BJ (cell line): ENCODE measurements at regions of chr12 and their contacts with region 1.

Region 1: GRCh38 chr12:25436203-25437030 is 116.7 kb downstream of the LMNTD1 start:
- DNase-seq: no peak
- H3K4me3 ChIP-seq: no peak overlapping the region
- H3K27me3 ChIP-seq: no peaks in the 10 kb centered on the region
- CTCF ChIP-seq: peak; percentile 81

Region 2: GRCh38 chr12:25377469-25378177 is 58.8 kb before region 1 on chr12:
- CTCF ChIA-PET with region 1: no interaction called
- POLR2A ChIA-PET with region 1: no interaction called
- DNase-seq: no peak
- H3K4me3 ChIP-seq: no peak overlapping the region
- H3K27me3 ChIP-seq: no peaks in the 10 kb centered on the region
- CTCF ChIP-seq: no peak

Region 3: GRCh38 chr12:25424211-25424731 is 12.1 kb before region 1 on chr12:
- CTCF ChIA-PET with region 1: interaction called, 20 read pairs
- POLR2A ChIA-PET with region 1: no interaction called
- DNase-seq: no peak
- H3K4me3 ChIP-seq: no peak overlapping the region
- H3K27me3 ChIP-seq: no peaks in the 10 kb centered on the region
- CTCF ChIP-seq: no peak

Region 4: GRCh38 chr12:25482625-25483024 is 46.2 kb after region 1 on chr12:
- CTCF ChIA-PET with region 1: no interaction called
- POLR2A ChIA-PET with region 1: no interaction called
- DNase-seq: no peak
- H3K4me3 ChIP-seq: no peak overlapping the region
- H3K27me3 ChIP-seq: no peaks in the 10 kb centered on the region
- CTCF ChIP-seq: no peak

Region 5: GRCh38 chr12:25557830-25558436 is 121.5 kb after region 1 on chr12:
- CTCF ChIA-PET with region 1: interaction called, 17 read pairs
- POLR2A ChIA-PET with region 1: no interaction called
- DNase-seq: no peak
- H3K4me3 ChIP-seq: no peak overlapping the region
- H3K27me3 ChIP-seq: no peaks in the 10 kb centered on the region
- CTCF ChIP-seq: peak; percentile 53

Region 6: DNA sequence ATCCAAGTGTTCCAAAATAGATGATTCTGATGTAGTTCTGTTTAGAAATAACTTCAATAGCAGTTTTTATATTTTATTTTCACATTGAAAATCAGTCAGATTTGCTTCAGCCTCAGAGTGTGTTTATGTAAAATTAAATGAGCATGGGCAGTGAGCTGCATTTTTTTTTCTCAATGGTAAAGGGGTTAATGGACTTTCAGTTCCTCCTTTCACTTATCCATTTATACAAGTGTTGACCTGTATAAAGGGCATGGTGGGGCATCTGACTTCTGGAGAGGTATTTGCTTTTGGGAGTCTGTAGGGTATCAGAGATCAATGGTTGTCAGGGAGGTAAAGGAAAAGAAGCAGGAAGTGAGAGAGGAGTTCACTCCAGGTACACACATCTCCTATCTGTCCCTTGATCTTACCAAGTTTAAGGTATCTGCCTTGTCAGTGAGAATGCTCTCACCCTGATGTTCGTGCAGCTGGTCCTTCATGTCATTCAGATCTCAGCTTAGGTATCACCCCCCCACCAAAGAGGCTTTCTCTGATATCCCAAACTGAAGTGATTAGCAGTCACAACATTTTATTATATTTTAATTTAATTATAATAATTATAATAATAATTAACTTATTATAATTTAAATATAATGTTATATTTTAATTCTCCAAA is 298.2 kb after region 1 on chr12:
- CTCF ChIA-PET with region 1: no interaction called
- POLR2A ChIA-PET with region 1: no interaction called
- DNase-seq: no peak
- H3K4me3 ChIP-seq: no peak overlapping the region
- H3K27me3 ChIP-seq: no peaks in the 10 kb centered on the region
- CTCF ChIP-seq: no peak